ENCODE measurements at regions of chr7 and their contacts with region 1.

Region 1: GRCh38 chr7:64618785-64619456 is 47.0 kb upstream of the ZNF107 start:
- DNase-seq: peak; percentile 65
- ATAC-seq: peak; percentile 92
- H3K4me3 ChIP-seq: no peak overlapping the region
- H3K27ac ChIP-seq: no peak overlapping the region
- H3K4me1 ChIP-seq: no peaks in the 10 kb centered on the region
- H3K27me3 ChIP-seq: no peaks in the 10 kb centered on the region
- CTCF ChIP-seq: peak; percentile 85
- EP300 ChIP-seq: no peak
- POLR2A ChIP-seq: no peak
- RAD21 ChIP-seq: peak; percentile 72

Region 2: DNA sequence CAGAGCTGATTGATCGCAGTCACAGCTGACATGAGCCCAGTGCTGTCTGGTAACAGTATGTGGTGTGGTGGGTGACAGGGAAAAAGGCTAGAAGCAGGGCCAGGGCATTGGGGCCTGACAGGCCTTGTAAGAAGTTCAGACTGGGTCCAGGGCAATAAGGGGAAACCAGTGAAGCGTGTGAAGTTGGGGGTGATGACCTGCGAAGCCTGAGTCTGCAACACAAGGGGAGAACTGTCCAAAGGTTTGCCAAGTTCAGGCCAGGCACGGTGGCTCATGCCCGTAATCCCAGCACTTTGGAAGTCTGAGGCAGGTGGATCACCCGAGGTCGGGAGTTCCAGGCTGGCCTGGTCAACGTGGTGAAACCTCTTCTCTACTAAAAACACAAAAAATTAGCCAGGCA is 1604.1 kb before region 1 on chr7:
- CTCF ChIA-PET with region 1: no interaction called
- POLR2A ChIA-PET with region 1: no interaction called
- in situ Hi-C with region 1: no loop called
- intact Hi-C with region 1: loop called (anchors 5 kb)
- DNase-seq: no peak
- ATAC-seq: no peak
- H3K4me3 ChIP-seq: no peak overlapping the region
- H3K27ac ChIP-seq: no peak overlapping the region
- H3K4me1 ChIP-seq: no peaks in the 10 kb centered on the region
- H3K27me3 ChIP-seq: no peaks in the 10 kb centered on the region
- CTCF ChIP-seq: no peak
- EP300 ChIP-seq: no peak
- POLR2A ChIP-seq: no peak
- RAD21 ChIP-seq: no peak

Region 3: DNA sequence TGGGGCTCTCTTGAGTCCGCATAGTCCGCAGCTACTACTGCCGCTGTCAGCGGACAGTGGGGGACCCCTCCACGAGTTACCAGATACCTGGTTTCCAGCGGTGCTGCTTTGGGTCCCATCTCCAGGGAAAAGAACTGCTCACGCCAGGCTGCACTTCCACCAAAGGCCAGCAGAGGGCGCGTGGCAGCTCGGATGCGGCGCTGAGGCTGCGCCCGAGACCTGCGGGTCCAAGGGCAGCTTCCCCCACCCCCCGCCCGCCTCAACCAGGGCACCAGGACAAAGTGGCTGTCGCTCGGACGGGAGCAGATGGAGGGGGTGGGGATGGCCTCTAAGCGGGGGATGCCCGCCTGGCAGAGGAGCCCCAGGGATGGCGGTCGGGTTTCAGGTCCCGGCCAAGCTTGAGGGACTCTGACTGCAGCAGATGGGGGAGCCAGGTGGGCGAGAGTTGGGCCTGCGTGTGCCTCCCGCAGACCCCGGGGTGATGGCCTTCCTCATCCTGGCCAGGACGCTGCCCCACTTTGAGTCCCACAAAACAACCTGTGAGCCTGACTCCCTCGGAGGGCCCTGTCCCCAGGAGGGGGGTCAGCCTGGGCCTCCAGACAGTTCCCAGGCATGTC is 435.7 kb before region 1 on chr7:
- CTCF ChIA-PET with region 1: no interaction called
- POLR2A ChIA-PET with region 1: no interaction called
- in situ Hi-C with region 1: loop called (anchors 25 kb)
- intact Hi-C with region 1: loop called (anchors 5 kb)
- DNase-seq: no peak
- ATAC-seq: no peak; the same call in 2 of the 3 replicates
- H3K4me3 ChIP-seq: no peak overlapping the region
- H3K27ac ChIP-seq: no peak overlapping the region
- H3K4me1 ChIP-seq: no peaks in the 10 kb centered on the region
- H3K27me3 ChIP-seq: no peaks in the 10 kb centered on the region
- CTCF ChIP-seq: peak; percentile 25; the same call in 1 of the 2 replicates
- EP300 ChIP-seq: no peak
- POLR2A ChIP-seq: no peak
- RAD21 ChIP-seq: no peak

Region 4: GRCh38 chr7:64463636-64464378 is 155.1 kb before region 1 on chr7:
- CTCF ChIA-PET with region 1: no interaction called
- POLR2A ChIA-PET with region 1: no interaction called
- in situ Hi-C with region 1: no loop called
- intact Hi-C with region 1: no loop called
- DNase-seq: no peak
- ATAC-seq: no peak; the same call in 2 of the 3 replicates
- H3K4me3 ChIP-seq: no peak overlapping the region
- H3K27ac ChIP-seq: no peak overlapping the region
- H3K4me1 ChIP-seq: no peaks in the 10 kb centered on the region
- H3K27me3 ChIP-seq: no peaks in the 10 kb centered on the region
- CTCF ChIP-seq: no peak
- EP300 ChIP-seq: no peak
- POLR2A ChIP-seq: no peak
- RAD21 ChIP-seq: no peak

Region 5: GRCh38 chr7:64602518-64602917 is 16.4 kb before region 1 on chr7:
- CTCF ChIA-PET with region 1: no interaction called
- POLR2A ChIA-PET with region 1: no interaction called
- in situ Hi-C with region 1: no loop called
- intact Hi-C with region 1: no loop called
- DNase-seq: no peak
- ATAC-seq: no peak
- H3K4me3 ChIP-seq: no peak overlapping the region
- H3K27ac ChIP-seq: no peak overlapping the region
- H3K4me1 ChIP-seq: no peaks in the 10 kb centered on the region
- H3K27me3 ChIP-seq: no peaks in the 10 kb centered on the region
- CTCF ChIP-seq: no peak
- EP300 ChIP-seq: no peak
- POLR2A ChIP-seq: no peak
- RAD21 ChIP-seq: no peak

Measured in HepG2 (cell line).